ENCODE measurements at regions of chr10 and their contacts with region 1.

Region 1: DNA sequence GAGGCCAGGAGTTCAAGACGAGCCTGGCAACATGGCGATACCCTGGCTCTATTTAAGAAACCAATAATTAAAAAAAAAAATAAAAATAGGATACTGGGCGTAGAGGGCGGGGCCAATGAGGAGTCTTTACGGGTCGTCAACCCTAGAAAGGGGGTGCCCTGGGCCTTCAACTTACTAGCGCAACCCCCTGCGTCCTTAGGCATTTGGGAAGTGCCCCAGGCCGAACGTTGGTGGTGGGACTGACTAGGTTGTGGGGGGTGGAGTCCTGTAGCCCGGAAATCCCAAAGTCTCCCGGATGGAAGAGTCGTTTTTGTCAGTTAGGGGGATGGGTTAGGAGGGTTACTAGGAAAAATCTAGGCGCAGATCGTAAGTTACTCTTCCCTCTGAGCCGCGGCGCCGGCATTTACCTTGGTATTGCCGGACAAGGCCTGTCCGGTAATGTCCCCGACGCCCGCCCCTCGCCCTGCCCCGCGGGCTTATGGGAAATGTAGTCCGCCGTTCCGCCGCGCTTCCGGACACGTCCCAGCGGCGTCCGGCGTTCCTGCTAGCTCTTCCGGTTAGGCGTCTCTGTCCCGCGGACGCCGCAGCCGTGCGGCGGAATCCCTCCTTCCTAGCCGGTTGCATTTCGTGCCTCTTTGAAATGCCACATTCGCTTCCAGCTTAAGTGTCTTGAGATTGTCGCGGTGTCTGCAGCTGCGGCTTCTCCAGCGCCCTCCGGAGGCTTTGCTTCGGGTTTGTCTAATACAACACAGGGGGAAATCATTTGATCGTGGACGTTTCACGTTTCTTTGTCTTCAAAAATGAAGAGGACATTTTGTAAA is 1.3 kb upstream of the ACBD5 start:
- DNase-seq: peak; percentile 79 to 89 (median 85)
- ATAC-seq: peak; percentile 82
- H3K4me3 ChIP-seq: peak overlapping the region; percentile 80
- H3K4me3 Mint-ChIP-seq: peak overlapping the region; percentile 91 to 99 (median 98)
- H3K27ac ChIP-seq: peak overlapping the region; percentile 93
- H3K27ac Mint-ChIP-seq: peak overlapping the region; percentile 93 to 100 (median 97)
- H3K4me1 ChIP-seq: peaks cover 8 to 21% of the 10 kb centered on the region in 2 donors
- H3K4me1 Mint-ChIP-seq: peaks cover 17 to 35% (median 34%) of the 10 kb centered on the region in 7 donors
- H3K27me3 ChIP-seq: no peaks in the 10 kb centered on the region
- H3K27me3 Mint-ChIP-seq: peaks cover 0 to 5% (median 0%) of the 10 kb centered on the region in 5 donors

Region 2: GRCh38 chr10:26437637-26438461 is 804.0 kb before region 1 on chr10 and contains the start of gene APBB1IP:
- CTCF ChIA-PET with region 1: no interaction called
- POLR2A ChIA-PET with region 1: no interaction called
- intact Hi-C with region 1: loop called (anchors 2 to 5 kb)
- DNase-seq: peak; percentile 24 to 60 (median 47)
- ATAC-seq: peak; percentile 73
- H3K4me3 ChIP-seq: peak within 1 kb of the TSS; percentile 95
- H3K4me3 Mint-ChIP-seq: peak within 1 kb of the TSS; percentile 80 to 98 (median 95)
- H3K27ac ChIP-seq: peak within 1 kb of the TSS; percentile 91
- H3K27ac Mint-ChIP-seq: peak within 1 kb of the TSS; percentile 91 to 98 (median 97)
- H3K4me1 ChIP-seq: peaks cover 16 to 35% of the 10 kb centered on the region in 2 donors
- H3K4me1 Mint-ChIP-seq: peaks cover 40 to 62% (median 57%) of the 10 kb centered on the region in 7 donors
- H3K27me3 ChIP-seq: no peaks in the 10 kb centered on the region
- H3K27me3 Mint-ChIP-seq: no peaks in the 10 kb centered on the region
- total RNA-seq, gene APBB1IP: 64.7 to 101 (median 88.0) TPM

Region 3: GRCh38 chr10:26697163-26697921 is 544.5 kb before region 1 on chr10 and contains the start of gene PDSS1:
- CTCF ChIA-PET with region 1: no interaction called
- POLR2A ChIA-PET with region 1: no interaction called
- intact Hi-C with region 1: loop called in 1 of 2 experiments (anchors 5 kb)
- DNase-seq: peak; percentile 34 to 77 (median 60)
- ATAC-seq: peak; percentile 77
- H3K4me3 ChIP-seq: peak within 1 kb of the TSS; percentile 77
- H3K4me3 Mint-ChIP-seq: peak within 1 kb of the TSS; percentile 92 to 100 (median 98)
- H3K27ac ChIP-seq: peak within 1 kb of the TSS; percentile 85
- H3K27ac Mint-ChIP-seq: peak within 1 kb of the TSS; percentile 94 to 99 (median 97)
- H3K4me1 ChIP-seq: peaks cover 7 to 17% of the 10 kb centered on the region in 2 donors
- H3K4me1 Mint-ChIP-seq: peaks cover 28 to 47% (median 34%) of the 10 kb centered on the region in 7 donors
- H3K27me3 ChIP-seq: no peaks in the 10 kb centered on the region
- H3K27me3 Mint-ChIP-seq: no peaks in the 10 kb centered on the region
- total RNA-seq, gene PDSS1: 3.8 to 15.2 (median 4.7) TPM

Region 4: GRCh38 chr10:27155066-27155754 is 86.7 kb before region 1 on chr10 and contains the start of gene MASTL:
- CTCF ChIA-PET with region 1: interaction called, 6 read pairs
- POLR2A ChIA-PET with region 1: interaction called, 38 read pairs
- intact Hi-C with region 1: loop called (anchors 1 kb)
- DNase-seq: peak; percentile 93 to 97 (median 96)
- ATAC-seq: peak; percentile 89
- H3K4me3 ChIP-seq: peak within 1 kb of the TSS; percentile 90
- H3K4me3 Mint-ChIP-seq: peak within 1 kb of the TSS; percentile 91 to 100 (median 99)
- H3K27ac ChIP-seq: peak within 1 kb of the TSS; percentile 99
- H3K27ac Mint-ChIP-seq: peak within 1 kb of the TSS; percentile 100
- H3K4me1 ChIP-seq: peaks cover 13 to 17% of the 10 kb centered on the region in 2 donors
- H3K4me1 Mint-ChIP-seq: peaks cover 34 to 60% (median 50%) of the 10 kb centered on the region in 7 donors
- H3K27me3 ChIP-seq: no peaks in the 10 kb centered on the region
- H3K27me3 Mint-ChIP-seq: peaks cover 0 to 2% (median 0%) of the 10 kb centered on the region in 5 donors
- total RNA-seq, gene MASTL: 8.4 to 29.0 (median 20.2) TPM

Region 5: DNA sequence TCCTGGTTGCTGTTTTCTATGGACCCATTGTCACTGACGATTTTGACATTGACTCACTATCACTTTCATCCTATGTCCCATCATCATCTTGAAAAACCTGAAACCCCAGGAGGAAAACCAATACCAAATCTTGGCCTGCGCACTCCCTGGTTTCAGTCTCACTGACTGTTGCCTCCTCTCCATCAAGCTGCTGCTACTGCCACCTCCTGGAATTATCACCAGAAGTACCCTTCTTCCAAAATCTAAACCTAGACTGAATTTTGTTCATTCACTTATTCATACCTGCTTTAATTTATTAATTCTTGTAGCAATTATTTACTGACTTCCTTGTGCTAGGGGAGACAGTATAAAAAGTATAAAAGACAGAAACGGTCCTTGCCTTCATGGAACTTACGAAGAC is 43.2 kb after region 1 on chr10:
- CTCF ChIA-PET with region 1: no interaction called
- POLR2A ChIA-PET with region 1: no interaction called
- intact Hi-C with region 1: loop called in 1 of 2 experiments (anchors 5 kb)
- DNase-seq: peak in 7 of 9 donors; percentile 17 to 54 (median 28)
- ATAC-seq: peak; percentile 73
- H3K4me3 ChIP-seq: no peak overlapping the region
- H3K4me3 Mint-ChIP-seq: no peak overlapping the region
- H3K27ac ChIP-seq: no peak overlapping the region
- H3K27ac Mint-ChIP-seq: no peak overlapping the region
- H3K4me1 ChIP-seq: no peaks in the 10 kb centered on the region
- H3K4me1 Mint-ChIP-seq: peaks cover 0 to 6% (median 0%) of the 10 kb centered on the region in 7 donors
- H3K27me3 ChIP-seq: no peaks in the 10 kb centered on the region
- H3K27me3 Mint-ChIP-seq: peaks cover 0 to 10% (median 0%) of the 10 kb centered on the region in 5 donors

Region 6: GRCh38 chr10:27742195-27743011 is 500.5 kb after region 1 on chr10:
- CTCF ChIA-PET with region 1: no interaction called
- POLR2A ChIA-PET with region 1: no interaction called
- intact Hi-C with region 1: loop called in 1 of 2 experiments (anchors 5 kb)
- DNase-seq: peak; percentile 58 to 82 (median 77)
- ATAC-seq: peak; percentile 87
- H3K4me3 ChIP-seq: peak overlapping the region; percentile 73
- H3K4me3 Mint-ChIP-seq: peak overlapping the region; percentile 70 to 96 (median 86)
- H3K27ac ChIP-seq: no peak overlapping the region
- H3K27ac Mint-ChIP-seq: peak overlapping the region in 1 of 9 donors; percentile 20
- H3K4me1 ChIP-seq: peaks cover 27 to 42% of the 10 kb centered on the region in 2 donors
- H3K4me1 Mint-ChIP-seq: peaks cover 23 to 44% (median 29%) of the 10 kb centered on the region in 7 donors
- H3K27me3 ChIP-seq: peaks cover 16 to 55% of the 10 kb centered on the region in 2 donors
- H3K27me3 Mint-ChIP-seq: peaks cover 51 to 82% (median 65%) of the 10 kb centered on the region in 5 donors

Region 7: DNA sequence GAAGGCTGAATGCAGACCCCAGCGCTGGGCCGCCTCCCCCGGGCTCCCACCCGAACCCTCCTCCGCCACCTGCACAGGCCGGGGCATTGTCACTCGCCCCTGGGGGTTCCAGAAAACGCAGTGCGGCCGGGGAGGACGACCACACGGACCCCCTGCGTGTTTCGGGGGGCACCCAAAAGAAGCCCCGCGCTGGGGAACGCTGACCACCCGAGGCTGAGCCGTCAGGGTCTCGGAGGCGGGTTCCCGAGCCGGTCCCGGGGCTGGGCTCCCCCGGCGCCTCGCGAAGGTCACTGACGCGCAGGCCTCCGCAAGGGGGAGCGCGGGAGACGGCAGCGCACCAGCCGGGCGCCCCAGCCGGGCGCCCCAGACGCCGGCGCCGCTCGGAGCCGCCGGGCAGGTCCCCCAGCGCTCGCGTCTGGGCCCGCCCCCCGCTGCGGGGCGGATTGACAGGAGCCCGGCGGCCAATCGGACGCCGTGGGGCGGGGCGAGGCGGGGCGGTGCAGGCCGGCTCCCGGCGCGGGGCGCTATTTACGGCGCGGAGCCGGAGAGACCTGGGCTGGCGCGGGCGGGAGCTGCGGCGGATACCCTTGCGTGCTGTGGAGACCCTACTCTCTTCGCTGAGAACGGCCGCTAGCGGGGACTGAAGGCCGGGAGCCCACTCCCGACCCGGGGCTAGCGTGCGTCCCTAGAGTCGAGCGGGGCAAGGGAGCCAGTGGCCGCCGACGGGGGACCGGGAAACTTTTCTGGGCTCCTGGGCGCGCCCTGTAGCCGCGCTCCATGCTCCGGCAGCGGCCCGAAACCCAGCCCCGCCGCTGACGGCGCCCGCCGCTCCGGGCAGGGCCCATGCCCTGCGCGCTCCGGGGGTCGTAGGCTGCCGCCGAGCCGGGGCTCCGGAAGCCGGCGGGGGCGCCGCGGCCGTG is 1435.4 kb after region 1 on chr10 and contains the start of gene BAMBI:
- CTCF ChIA-PET with region 1: no interaction called
- POLR2A ChIA-PET with region 1: no interaction called
- intact Hi-C with region 1: loop called in 1 of 2 experiments (anchors 5 kb)
- DNase-seq: peak; percentile 86 to 95 (median 90)
- ATAC-seq: peak; percentile 97
- H3K4me3 ChIP-seq: peak within 1 kb of the TSS; percentile 57
- H3K4me3 Mint-ChIP-seq: peak within 1 kb of the TSS; percentile 79 to 94 (median 84)
- H3K27ac ChIP-seq: no peak within 1 kb of the TSS
- H3K27ac Mint-ChIP-seq: peak within 1 kb of the TSS in 3 of 9 donors; percentile 24 to 52 (median 43)
- H3K4me1 ChIP-seq: peaks cover 0 to 26% of the 10 kb centered on the region in 2 donors
- H3K4me1 Mint-ChIP-seq: peaks cover 19 to 32% (median 26%) of the 10 kb centered on the region in 7 donors
- H3K27me3 ChIP-seq: peaks cover 11 to 20% of the 10 kb centered on the region in 2 donors
- H3K27me3 Mint-ChIP-seq: peaks cover 63 to 80% (median 70%) of the 10 kb centered on the region in 5 donors
- total RNA-seq, gene BAMBI: 0.12 to 1.6 (median 0.80) TPM in 4 of 5 experiments, not detected in the other

Measured in naive thymus-derived CD4-positive, alpha-beta T cell (primary cell).